ENCODE measurements at regions of chr3 and their contacts with region 1.

Region 1: GRCh38 chr3:58324391-58325390 is 8.0 kb upstream of the PXK start:
- DNase-seq: no peak
- H3K4me3 ChIP-seq: no peak overlapping the region
- CTCF ChIP-seq: no peak
- POLR2A ChIP-seq: no peak

Region 2: DNA sequence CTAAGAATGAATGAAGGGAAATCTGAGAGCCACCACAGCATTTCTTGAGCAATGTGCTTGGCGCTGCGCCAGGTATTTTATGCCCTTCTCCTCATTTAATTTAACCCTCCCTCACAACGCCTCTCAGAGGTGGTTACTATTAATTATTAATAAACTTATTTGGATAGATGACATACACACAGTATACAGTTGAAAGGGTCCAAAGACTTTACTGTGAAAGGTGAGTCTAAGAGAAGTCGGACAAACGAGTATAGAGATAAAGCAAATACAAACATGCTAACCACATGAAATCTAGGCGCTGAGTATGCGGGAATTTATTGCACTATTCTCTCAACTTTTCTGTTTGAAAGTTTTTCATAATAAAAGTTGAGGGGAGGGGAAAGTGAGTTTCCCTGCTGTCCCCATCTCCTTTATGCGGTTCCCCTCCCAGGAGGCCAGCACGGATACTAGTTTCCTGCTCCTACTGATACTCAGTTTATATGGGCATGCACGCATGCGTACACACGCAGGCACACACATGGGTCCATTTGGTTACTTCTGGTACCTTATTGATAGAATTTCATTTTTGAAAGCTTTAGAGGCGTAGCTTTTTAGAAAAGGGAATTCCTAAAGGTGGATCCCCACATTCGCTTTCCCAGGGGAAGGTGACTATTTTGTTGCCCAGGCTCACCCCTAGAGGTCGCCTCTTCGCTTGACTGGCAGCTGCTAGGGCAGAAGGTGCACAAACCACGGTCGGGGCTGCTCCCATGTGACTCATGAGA is 138.7 kb after region 1 on chr3:
- intact Hi-C with region 1: no loop called
- DNase-seq: peak; percentile 57 to 91
- H3K4me3 ChIP-seq: no peak overlapping the region
- CTCF ChIP-seq: peak in 1 of 3 donors; percentile 18
- POLR2A ChIP-seq: no peak

Region 3: GRCh38 chr3:58532794-58533220 is 208.1 kb after region 1 on chr3:
- intact Hi-C with region 1: loop called (anchors 10 kb)
- DNase-seq: peak; percentile 63 to 93
- H3K4me3 ChIP-seq: no peak overlapping the region
- CTCF ChIP-seq: peak in 1 of 3 donors; percentile 79
- POLR2A ChIP-seq: no peak

Region 4: DNA sequence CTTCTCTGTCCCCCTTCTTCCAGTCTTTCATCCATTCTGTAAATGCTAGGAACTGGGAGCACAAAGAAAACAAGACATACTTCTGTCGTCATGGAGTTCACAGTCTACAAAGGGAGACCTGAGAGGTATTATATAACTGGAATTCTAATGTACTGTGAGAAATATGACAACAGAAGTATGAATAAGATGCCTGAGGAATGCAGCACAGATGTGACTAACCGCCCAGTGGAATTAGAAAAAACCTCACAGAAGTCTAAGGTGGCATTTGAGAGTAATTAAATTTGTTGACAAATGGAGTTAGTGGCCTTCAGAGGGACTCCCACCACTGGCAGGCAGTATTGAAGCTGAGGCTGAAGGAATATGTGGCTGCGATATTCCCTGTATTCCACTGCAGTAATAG is 510.4 kb after region 1 on chr3:
- intact Hi-C with region 1: no loop called
- DNase-seq: no peak
- H3K4me3 ChIP-seq: no peak overlapping the region
- CTCF ChIP-seq: no peak
- POLR2A ChIP-seq: no peak